ENCODE measurements at regions of chr10 and their contacts with region 1.

Region 1: GRCh38 chr10:73940634-73941221 is 29.8 kb downstream of the PLAU start:
- DNase-seq: peak; percentile 71 to 91 (median 81)
- ATAC-seq: peak; percentile 100
- H3K4me3 ChIP-seq: no peak overlapping the region
- H3K4me3 Mint-ChIP-seq: peak overlapping the region; percentile 37
- H3K27ac ChIP-seq: no peak overlapping the region
- H3K27ac Mint-ChIP-seq: no peak overlapping the region
- H3K4me1 ChIP-seq: peaks cover 4% of the 10 kb centered on the region
- H3K4me1 Mint-ChIP-seq: peaks cover 6% of the 10 kb centered on the region
- H3K27me3 ChIP-seq: no peaks in the 10 kb centered on the region
- H3K27me3 Mint-ChIP-seq: no peaks in the 10 kb centered on the region
- CTCF ChIP-seq: peak; percentile 95

Region 2: GRCh38 chr10:73529089-73529832 is 411.5 kb before region 1 on chr10:
- CTCF ChIA-PET with region 1: no interaction called
- POLR2A ChIA-PET with region 1: no interaction called
- intact Hi-C with region 1: loop called in 1 of 2 experiments (anchors 2 kb)
- DNase-seq: peak; percentile 4 to 82 (median 43)
- ATAC-seq: peak; percentile 94
- H3K4me3 ChIP-seq: no peak overlapping the region
- H3K4me3 Mint-ChIP-seq: no peak overlapping the region
- H3K27ac ChIP-seq: no peak overlapping the region
- H3K27ac Mint-ChIP-seq: no peak overlapping the region
- H3K4me1 ChIP-seq: no peaks in the 10 kb centered on the region
- H3K4me1 Mint-ChIP-seq: no peaks in the 10 kb centered on the region
- H3K27me3 ChIP-seq: no peaks in the 10 kb centered on the region
- H3K27me3 Mint-ChIP-seq: no peaks in the 10 kb centered on the region
- CTCF ChIP-seq: peak; percentile 93

Region 3: GRCh38 chr10:73857446-73857845 is 83.3 kb before region 1 on chr10:
- CTCF ChIA-PET with region 1: interaction called, 95 read pairs
- POLR2A ChIA-PET with region 1: no interaction called
- intact Hi-C with region 1: no loop called
- DNase-seq: peak in 4 of 9 experiments; percentile 31 to 60 (median 48)
- ATAC-seq: peak; percentile 53
- H3K4me3 ChIP-seq: no peak overlapping the region
- H3K4me3 Mint-ChIP-seq: peak overlapping the region; percentile 50
- H3K27ac ChIP-seq: no peak overlapping the region
- H3K27ac Mint-ChIP-seq: peak overlapping the region; percentile 81
- H3K4me1 ChIP-seq: peaks cover 62% of the 10 kb centered on the region
- H3K4me1 Mint-ChIP-seq: peaks cover 60% of the 10 kb centered on the region
- H3K27me3 ChIP-seq: no peaks in the 10 kb centered on the region
- H3K27me3 Mint-ChIP-seq: no peaks in the 10 kb centered on the region
- CTCF ChIP-seq: no peak

Region 4: DNA sequence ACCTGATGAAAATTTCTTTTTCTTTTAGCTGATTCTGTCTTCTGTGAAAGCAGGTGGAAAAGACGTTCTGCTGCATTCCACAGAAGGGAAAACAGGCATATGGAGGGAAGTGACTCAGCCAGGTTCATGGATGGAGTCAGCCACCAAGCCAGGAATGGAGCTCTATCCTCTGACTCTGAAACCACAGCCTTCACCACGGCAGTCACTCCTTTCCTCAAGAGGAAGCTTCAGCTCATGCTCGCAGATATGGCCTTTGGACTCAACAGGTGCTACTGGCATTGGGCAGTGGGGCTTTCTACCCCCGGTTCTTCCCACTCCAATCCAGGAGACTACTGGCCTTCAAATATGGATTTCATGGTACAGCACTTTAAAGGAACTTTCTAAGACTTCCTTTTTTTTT is 41.3 kb before region 1 on chr10:
- CTCF ChIA-PET with region 1: interaction called, 618 read pairs
- POLR2A ChIA-PET with region 1: no interaction called
- intact Hi-C with region 1: no loop called
- DNase-seq: no peak
- ATAC-seq: no peak
- H3K4me3 ChIP-seq: no peak overlapping the region
- H3K4me3 Mint-ChIP-seq: no peak overlapping the region
- H3K27ac ChIP-seq: no peak overlapping the region
- H3K27ac Mint-ChIP-seq: no peak overlapping the region
- H3K4me1 ChIP-seq: no peaks in the 10 kb centered on the region
- H3K4me1 Mint-ChIP-seq: no peaks in the 10 kb centered on the region
- H3K27me3 ChIP-seq: no peaks in the 10 kb centered on the region
- H3K27me3 Mint-ChIP-seq: peaks cover 25% of the 10 kb centered on the region
- CTCF ChIP-seq: no peak

Region 5: GRCh38 chr10:73926152-73926764 is 14.5 kb before region 1 on chr10:
- CTCF ChIA-PET with region 1: interaction called, 62 read pairs
- POLR2A ChIA-PET with region 1: no interaction called
- intact Hi-C with region 1: no loop called
- DNase-seq: peak in 1 of 9 experiments; percentile 14
- ATAC-seq: no peak
- H3K4me3 ChIP-seq: no peak overlapping the region
- H3K4me3 Mint-ChIP-seq: no peak overlapping the region
- H3K27ac ChIP-seq: no peak overlapping the region
- H3K27ac Mint-ChIP-seq: no peak overlapping the region
- H3K4me1 ChIP-seq: peaks cover 18% of the 10 kb centered on the region
- H3K4me1 Mint-ChIP-seq: peaks cover 14% of the 10 kb centered on the region
- H3K27me3 ChIP-seq: peaks cover 3 to 12% of the 10 kb centered on the region in 2 experiments
- H3K27me3 Mint-ChIP-seq: peaks cover 48% of the 10 kb centered on the region
- CTCF ChIP-seq: no peak

Region 6: DNA sequence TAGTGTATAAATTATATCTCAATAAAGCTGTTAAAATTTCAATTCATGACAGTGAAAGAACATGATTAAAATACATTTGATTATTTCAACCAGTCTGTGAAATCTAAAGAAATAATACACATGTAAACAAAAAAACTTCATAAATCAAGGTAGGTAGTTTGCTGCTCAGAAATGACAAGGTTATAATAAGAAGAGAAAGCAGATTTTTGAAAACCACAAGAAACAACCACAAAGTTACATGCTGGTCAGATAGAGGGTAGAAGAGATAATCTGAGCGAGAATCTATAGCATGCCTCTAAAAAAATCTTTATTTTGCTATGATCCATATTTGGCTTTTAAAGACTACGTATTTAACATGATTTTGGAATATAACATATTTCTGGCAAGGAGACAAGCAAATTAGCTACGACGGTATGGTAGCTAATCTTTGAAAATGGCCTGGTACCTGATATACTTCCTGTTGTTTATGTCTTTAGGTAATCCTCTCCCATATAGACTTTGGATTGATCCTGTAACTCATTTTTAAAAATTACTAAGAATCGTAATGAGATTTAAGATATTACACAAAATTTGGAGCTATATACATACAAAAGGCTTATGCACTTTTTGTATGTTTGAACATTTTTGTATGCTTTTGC is 33.7 kb after region 1 on chr10:
- CTCF ChIA-PET with region 1: interaction called, 10 read pairs
- POLR2A ChIA-PET with region 1: no interaction called
- intact Hi-C with region 1: no loop called
- DNase-seq: peak in 2 of 9 experiments; percentile 32 to 52
- ATAC-seq: peak; percentile 46
- H3K4me3 ChIP-seq: peak overlapping the region in 1 of 2 experiments; percentile 12
- H3K4me3 Mint-ChIP-seq: peak overlapping the region; percentile 40
- H3K27ac ChIP-seq: no peak overlapping the region
- H3K27ac Mint-ChIP-seq: peak overlapping the region; percentile 0
- H3K4me1 ChIP-seq: peaks cover 19% of the 10 kb centered on the region
- H3K4me1 Mint-ChIP-seq: peaks cover 19% of the 10 kb centered on the region
- H3K27me3 ChIP-seq: no peaks in the 10 kb centered on the region
- H3K27me3 Mint-ChIP-seq: no peaks in the 10 kb centered on the region
- CTCF ChIP-seq: no peak

Region 7: DNA sequence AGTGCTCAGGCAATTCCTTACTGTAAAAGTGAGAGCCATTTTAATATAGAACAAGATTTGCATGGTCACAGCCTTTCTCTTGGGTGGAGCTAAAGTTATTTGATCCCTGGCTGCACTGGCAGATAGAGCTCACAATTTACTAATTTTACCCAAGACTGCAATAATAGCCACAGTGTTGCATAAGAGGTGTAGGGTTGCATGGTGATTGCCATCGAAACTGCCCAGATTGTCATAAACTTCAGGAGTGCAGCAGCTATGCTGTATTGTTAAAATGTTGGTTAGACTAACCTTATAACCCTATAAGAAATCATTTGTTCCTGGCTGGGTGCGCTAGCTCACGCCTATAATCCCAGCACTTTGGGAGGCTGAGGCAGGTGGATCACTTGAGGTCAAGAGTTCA is 107.1 kb after region 1 on chr10:
- CTCF ChIA-PET with region 1: interaction called, 13 read pairs
- POLR2A ChIA-PET with region 1: no interaction called
- intact Hi-C with region 1: no loop called
- DNase-seq: no peak
- ATAC-seq: no peak
- H3K4me3 ChIP-seq: no peak overlapping the region
- H3K4me3 Mint-ChIP-seq: no peak overlapping the region
- H3K27ac ChIP-seq: no peak overlapping the region
- H3K27ac Mint-ChIP-seq: no peak overlapping the region
- H3K4me1 ChIP-seq: no peaks in the 10 kb centered on the region
- H3K4me1 Mint-ChIP-seq: no peaks in the 10 kb centered on the region
- H3K27me3 ChIP-seq: no peaks in the 10 kb centered on the region
- H3K27me3 Mint-ChIP-seq: no peaks in the 10 kb centered on the region
- CTCF ChIP-seq: no peak